Panc1 (cell line): ENCODE measurements at regions of chr10 and their contacts with region 1.

Region 1: DNA sequence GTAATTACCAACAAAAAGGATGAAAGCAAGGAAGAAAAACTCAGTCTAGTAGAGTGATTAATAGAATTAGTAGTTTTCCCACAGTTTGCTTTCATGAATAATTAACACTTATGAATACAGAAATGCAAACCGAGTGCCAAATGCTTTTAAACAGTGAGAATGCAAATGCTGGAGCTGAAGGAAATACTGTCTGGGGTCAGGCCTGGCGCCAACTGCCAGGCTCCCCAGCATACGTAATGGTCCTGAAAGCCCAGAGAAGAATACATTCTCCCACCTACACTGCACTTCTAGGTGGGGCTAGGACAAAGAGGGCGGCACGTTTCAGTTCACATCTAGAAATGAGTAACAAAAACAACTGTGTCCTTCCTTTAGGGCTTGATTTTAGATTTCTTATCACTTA is 30.0 kb downstream of the GLUD1 start:
- DNase-seq: no peak
- ATAC-seq: no peak
- H3K4me3 ChIP-seq: no peak overlapping the region
- H3K27ac ChIP-seq: no peak overlapping the region
- H3K4me1 ChIP-seq: no peaks in the 10 kb centered on the region
- H3K27me3 ChIP-seq: no peaks in the 10 kb centered on the region
- CTCF ChIP-seq: no peak

Region 2: DNA sequence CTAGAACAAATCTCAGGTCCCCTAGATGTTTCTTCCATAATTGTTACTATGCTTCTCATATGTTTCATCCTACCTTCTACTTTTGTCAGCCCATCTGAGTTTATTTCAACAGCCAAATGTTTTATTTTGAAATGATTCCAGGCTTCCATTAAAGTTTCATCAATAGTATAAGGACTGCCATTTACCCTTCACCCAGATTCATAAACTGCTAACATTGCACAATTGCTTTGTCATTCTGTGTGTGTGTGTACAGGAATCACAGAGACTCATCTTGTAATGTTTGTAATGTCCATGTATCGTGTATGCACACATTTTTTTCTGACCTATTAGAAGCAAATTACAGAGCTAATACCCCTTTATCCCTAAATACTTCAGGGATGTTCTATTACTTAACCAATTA is 132.8 kb before region 1 on chr10:
- CTCF ChIA-PET with region 1: interaction called, 10 read pairs
- POLR2A ChIA-PET with region 1: no interaction called
- in situ Hi-C with region 1: no loop called
- intact Hi-C with region 1: no loop called
- DNase-seq: no peak
- ATAC-seq: no peak
- H3K4me3 ChIP-seq: no peak overlapping the region
- H3K27ac ChIP-seq: no peak overlapping the region
- H3K4me1 ChIP-seq: no peaks in the 10 kb centered on the region
- H3K27me3 ChIP-seq: no peaks in the 10 kb centered on the region
- CTCF ChIP-seq: no peak

Region 3: GRCh38 chr10:87000491-87000890 is 64.2 kb before region 1 on chr10:
- CTCF ChIA-PET with region 1: no interaction called
- POLR2A ChIA-PET with region 1: interaction called, 10 read pairs
- in situ Hi-C with region 1: no loop called
- intact Hi-C with region 1: no loop called
- DNase-seq: no peak
- ATAC-seq: no peak
- H3K4me3 ChIP-seq: no peak overlapping the region
- H3K27ac ChIP-seq: no peak overlapping the region
- H3K4me1 ChIP-seq: no peaks in the 10 kb centered on the region
- H3K27me3 ChIP-seq: no peaks in the 10 kb centered on the region
- CTCF ChIP-seq: no peak